Natural killer cell (primary cell): ENCODE measurements at regions of chr13 and their contacts with region 1.

Region 1: DNA sequence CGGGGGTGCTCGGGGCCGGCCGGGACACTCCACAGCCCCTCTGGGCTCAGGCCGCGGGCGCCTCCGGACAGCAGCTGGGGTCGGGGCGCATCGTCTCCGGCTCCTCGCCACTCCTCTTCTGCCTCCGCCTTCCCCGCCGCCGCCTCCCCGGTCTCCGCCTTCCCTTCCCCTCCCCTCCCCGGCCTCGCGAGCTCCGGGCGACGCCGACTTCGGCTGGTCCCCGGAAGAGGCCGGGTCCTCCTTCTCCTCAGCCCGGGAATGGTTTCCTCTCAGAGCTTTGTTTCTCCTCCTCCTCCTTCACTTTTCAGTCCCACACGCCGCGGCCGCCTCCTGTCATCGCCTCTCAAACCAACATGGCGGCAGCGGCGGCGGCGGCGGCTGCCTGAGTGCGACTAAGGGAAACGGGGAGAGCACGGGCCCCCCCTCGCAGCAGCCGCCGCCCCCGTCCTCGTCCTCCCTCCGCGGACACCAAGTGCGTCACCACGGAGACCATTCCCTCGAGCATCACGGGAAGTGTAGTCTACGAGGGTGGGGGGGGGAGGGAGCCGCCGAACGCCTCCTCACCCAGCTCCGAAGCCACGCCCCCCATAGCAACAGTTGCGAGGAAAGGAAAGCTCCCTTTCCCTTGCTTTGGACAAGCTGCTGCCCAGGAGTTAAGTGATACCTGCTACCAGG is at the start of gene UBL3:
- DNase-seq: peak; percentile 87 to 96
- ATAC-seq: peak; percentile 86 to 96 (median 92)
- H3K4me3 ChIP-seq: peak within 1 kb of the TSS; percentile 95
- H3K4me3 Mint-ChIP-seq: peak within 1 kb of the TSS; percentile 95
- H3K27ac ChIP-seq: peak within 1 kb of the TSS; percentile 99
- H3K27ac Mint-ChIP-seq: peak within 1 kb of the TSS; percentile 96 to 100
- H3K4me1 ChIP-seq: peaks cover 6% of the 10 kb centered on the region
- H3K4me1 Mint-ChIP-seq: peaks cover 40 to 47% of the 10 kb centered on the region in 2 donors
- H3K27me3 ChIP-seq: no peaks in the 10 kb centered on the region
- H3K27me3 Mint-ChIP-seq: peaks cover 0 to 6% of the 10 kb centered on the region in 2 donors
- CTCF ChIP-seq: no peak
- total RNA-seq, gene UBL3: 29.6 to 36.0 (median 31.5) TPM

Region 2: DNA sequence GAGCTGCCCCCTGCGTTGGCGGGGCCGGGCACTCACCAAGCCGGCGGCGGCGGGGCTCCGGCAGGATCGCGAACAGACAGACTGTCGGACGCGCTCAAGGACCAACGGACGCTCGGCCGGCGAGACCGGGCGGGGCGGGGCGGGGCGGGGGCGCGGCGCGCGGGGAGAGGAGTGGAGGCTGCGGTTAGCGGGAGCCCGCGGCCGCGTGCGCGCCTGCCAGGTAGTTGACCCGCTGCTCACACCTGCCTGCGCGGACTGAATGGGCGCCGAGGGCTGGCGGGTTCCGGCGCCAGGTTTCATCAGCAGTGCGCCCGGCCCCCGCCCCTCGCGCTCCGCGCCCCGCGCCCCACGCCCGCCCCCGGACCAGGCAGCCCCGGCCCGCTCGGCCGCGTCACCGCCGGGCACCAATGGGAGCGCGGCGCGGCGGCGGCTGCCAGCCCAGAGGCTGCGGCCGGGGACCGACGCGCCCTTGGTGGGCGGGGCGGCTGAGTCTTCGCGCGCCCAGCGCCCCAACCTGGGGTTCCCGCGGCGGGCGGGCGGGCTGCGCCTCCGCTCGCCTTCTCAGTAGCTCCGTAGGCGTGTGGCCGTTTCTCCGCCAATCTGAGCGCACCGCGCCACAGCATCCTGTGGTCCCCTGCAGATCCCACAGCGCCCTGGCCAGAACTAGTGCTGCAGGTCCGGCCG is 254.8 kb before region 1 on chr13 and contains the start of gene SLC7A1:
- intact Hi-C with region 1: loop called (anchors 2 kb)
- DNase-seq: peak; percentile 86 to 93
- ATAC-seq: peak; percentile 82 to 94 (median 88)
- H3K4me3 ChIP-seq: peak within 1 kb of the TSS; percentile 49
- H3K4me3 Mint-ChIP-seq: peak within 1 kb of the TSS; percentile 89
- H3K27ac ChIP-seq: peak within 1 kb of the TSS; percentile 46
- H3K27ac Mint-ChIP-seq: peak within 1 kb of the TSS; percentile 78 to 85
- H3K4me1 ChIP-seq: peaks cover 13% of the 10 kb centered on the region
- H3K4me1 Mint-ChIP-seq: peaks cover 27 to 28% of the 10 kb centered on the region in 2 donors
- H3K27me3 ChIP-seq: no peaks in the 10 kb centered on the region
- H3K27me3 Mint-ChIP-seq: no peaks in the 10 kb centered on the region
- CTCF ChIP-seq: no peak
- total RNA-seq, gene SLC7A1: 8.7 to 12.6 (median 10.2) TPM

Region 3: DNA sequence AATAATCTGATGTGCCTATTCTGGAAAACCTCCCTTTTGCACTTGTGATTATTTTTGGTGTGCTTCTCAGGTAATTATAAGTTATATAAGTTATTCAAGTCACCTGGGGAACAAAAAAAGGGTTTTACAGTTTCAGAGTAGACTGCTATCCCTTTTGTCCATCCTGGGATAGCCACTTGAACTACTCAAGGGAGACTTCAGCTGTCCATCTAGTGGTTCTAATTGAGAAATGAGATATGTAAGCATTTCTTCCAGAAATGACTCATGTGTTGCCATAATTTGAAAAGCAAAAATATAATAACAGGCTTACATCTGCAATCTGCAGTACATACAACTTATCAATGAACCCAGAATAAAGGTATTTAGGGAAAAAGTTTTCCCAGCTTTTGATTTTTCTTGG is 20.4 kb before region 1 on chr13:
- intact Hi-C with region 1: no loop called
- DNase-seq: no peak
- ATAC-seq: no peak
- H3K4me3 ChIP-seq: no peak overlapping the region
- H3K4me3 Mint-ChIP-seq: no peak overlapping the region
- H3K27ac ChIP-seq: no peak overlapping the region
- H3K27ac Mint-ChIP-seq: no peak overlapping the region
- H3K4me1 ChIP-seq: no peaks in the 10 kb centered on the region
- H3K4me1 Mint-ChIP-seq: peaks cover 27 to 55% of the 10 kb centered on the region in 2 donors
- H3K27me3 ChIP-seq: no peaks in the 10 kb centered on the region
- H3K27me3 Mint-ChIP-seq: no peaks in the 10 kb centered on the region
- CTCF ChIP-seq: no peak

Region 4: DNA sequence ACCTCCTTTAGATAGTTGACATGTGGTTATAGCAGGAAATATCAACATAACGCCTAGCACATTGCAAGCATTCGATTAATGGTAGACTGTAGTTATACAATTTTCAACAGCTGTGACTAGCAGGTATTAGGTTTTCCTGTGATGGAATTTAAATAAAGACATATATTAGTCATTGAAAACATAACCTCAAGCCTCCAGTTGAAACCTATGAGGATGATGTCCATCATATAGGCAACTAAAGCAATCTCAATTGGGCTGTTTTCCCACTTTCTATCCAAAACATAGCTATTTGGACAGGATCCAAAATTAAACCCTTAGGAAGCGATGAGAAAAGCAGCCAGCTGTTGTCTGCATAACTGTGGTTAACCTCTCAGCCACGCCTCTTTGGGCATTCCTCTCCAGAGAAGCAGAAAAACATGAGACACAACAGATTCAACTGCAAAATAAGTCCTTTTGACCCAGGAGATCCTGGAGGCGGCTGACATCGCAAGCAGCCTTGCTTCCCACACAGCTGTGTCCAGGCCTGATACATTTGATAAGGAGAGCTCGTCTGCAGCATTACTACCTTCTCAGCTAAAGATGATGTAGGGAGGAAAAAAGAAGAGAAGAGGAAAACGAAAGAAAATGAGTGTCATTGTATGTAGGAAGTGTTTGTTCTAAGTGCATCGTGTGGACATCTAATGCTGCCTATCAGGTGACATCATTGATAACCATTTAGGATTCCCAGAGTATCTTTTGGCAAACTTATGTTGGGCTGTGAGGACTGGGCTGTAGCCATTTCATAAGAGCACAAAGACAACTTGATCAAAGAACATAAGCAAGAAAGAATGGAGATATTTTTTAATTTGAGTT is 52.0 kb after region 1 on chr13:
- intact Hi-C with region 1: loop called (anchors 1 kb)
- DNase-seq: peak; percentile 52 to 78
- ATAC-seq: peak; percentile 85 to 94 (median 93)
- H3K4me3 ChIP-seq: peak overlapping the region; percentile 25
- H3K4me3 Mint-ChIP-seq: peak overlapping the region; percentile 93
- H3K27ac ChIP-seq: peak overlapping the region; percentile 73
- H3K27ac Mint-ChIP-seq: peak overlapping the region; percentile 81 to 93
- H3K4me1 ChIP-seq: peaks cover 22% of the 10 kb centered on the region
- H3K4me1 Mint-ChIP-seq: peaks cover 39 to 40% of the 10 kb centered on the region in 2 donors
- H3K27me3 ChIP-seq: peaks cover 4% of the 10 kb centered on the region
- H3K27me3 Mint-ChIP-seq: peaks cover 0 to 2% of the 10 kb centered on the region in 2 donors
- CTCF ChIP-seq: no peak

Region 5: DNA sequence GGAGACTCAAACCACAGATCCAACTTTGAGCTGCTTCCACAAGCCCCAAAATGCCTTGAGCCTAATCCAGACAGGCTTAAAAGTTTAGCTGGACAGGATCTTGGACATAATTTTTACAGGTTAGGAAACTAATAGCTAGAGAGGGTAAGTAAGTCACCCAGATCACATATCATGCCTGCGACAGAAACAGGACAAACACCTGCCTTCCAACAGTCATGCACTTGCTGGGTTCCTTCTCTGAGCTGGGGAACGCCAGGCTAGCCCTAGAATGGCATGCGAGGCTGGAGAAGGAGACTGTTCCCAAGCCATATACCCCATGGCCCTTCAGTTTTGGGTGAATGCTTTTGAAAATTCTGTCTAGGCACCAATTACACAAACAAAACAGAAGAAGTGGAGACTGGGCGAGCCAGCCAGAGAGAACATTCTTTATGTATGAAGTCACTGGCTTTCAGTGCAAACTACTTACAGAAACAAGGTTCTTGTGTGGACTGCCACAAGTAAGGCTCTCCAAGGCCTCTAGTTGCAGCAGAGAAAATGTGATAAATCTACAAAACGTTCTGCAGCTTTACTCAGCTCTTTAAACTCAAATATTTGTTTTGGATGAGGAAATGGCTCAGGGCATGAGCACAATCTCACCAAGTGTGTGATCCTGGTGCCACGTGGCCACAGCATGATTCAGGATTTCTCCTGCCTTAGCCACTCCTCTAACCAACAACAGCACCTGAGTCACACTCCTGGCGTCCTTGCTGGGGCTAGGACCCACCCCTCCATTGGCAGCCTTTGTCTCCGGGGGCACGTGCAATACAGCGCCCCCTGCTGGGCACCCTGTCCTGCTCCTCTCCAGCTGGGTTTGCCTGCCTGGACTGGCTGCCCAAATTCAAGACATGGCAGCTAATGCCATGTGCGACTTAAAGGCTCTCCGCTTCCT is 73.5 kb after region 1 on chr13:
- intact Hi-C with region 1: loop called (anchors 5 kb)
- DNase-seq: peak; percentile 62 to 73
- ATAC-seq: peak; percentile 68 to 89 (median 85)
- H3K4me3 ChIP-seq: no peak overlapping the region
- H3K4me3 Mint-ChIP-seq: no peak overlapping the region
- H3K27ac ChIP-seq: no peak overlapping the region
- H3K27ac Mint-ChIP-seq: peak overlapping the region in 1 of 2 donors; percentile 16
- H3K4me1 ChIP-seq: peaks cover 4% of the 10 kb centered on the region
- H3K4me1 Mint-ChIP-seq: peaks cover 11 to 21% of the 10 kb centered on the region in 2 donors
- H3K27me3 ChIP-seq: no peaks in the 10 kb centered on the region
- H3K27me3 Mint-ChIP-seq: peaks cover under 1 to 3% of the 10 kb centered on the region in 2 donors
- CTCF ChIP-seq: peak; percentile 92